Caco-2 (cell line): ENCODE measurements at regions of chrX and their contacts with region 1.

Region 1: GRCh38 chrX:136953867-136954787 is 73.6 kb upstream of the RBMX start:
- DNase-seq: peak; percentile 60 to 72
- H3K4me3 ChIP-seq: no peak overlapping the region
- H3K4me3 Mint-ChIP-seq: no peak overlapping the region
- H3K27ac Mint-ChIP-seq: no peak overlapping the region
- H3K4me1 ChIP-seq: no peaks in the 10 kb centered on the region
- H3K4me1 Mint-ChIP-seq: no peaks in the 10 kb centered on the region
- H3K27me3 ChIP-seq: no peaks in the 10 kb centered on the region
- H3K27me3 Mint-ChIP-seq: no peaks in the 10 kb centered on the region
- CTCF ChIP-seq: peak; percentile 46 to 74

Region 2: GRCh38 chrX:137051978-137052642 is 98.0 kb after region 1 on chrX:
- CTCF ChIA-PET with region 1: interaction called, 5 read pairs
- POLR2A ChIA-PET with region 1: no interaction called
- intact Hi-C with region 1: loop called (anchors 1 kb)
- DNase-seq: peak; percentile 50 to 70
- H3K4me3 ChIP-seq: 0 out of 2 replicates have a peak overlapping the region, but pooled peaks have one; percentile 6
- H3K4me3 Mint-ChIP-seq: peak overlapping the region; percentile 64
- H3K27ac Mint-ChIP-seq: no peak overlapping the region
- H3K4me1 ChIP-seq: no peaks in the 10 kb centered on the region
- H3K4me1 Mint-ChIP-seq: no peaks in the 10 kb centered on the region
- H3K27me3 ChIP-seq: no peaks in the 10 kb centered on the region
- H3K27me3 Mint-ChIP-seq: peaks cover 17% of the 10 kb centered on the region
- CTCF ChIP-seq: peak; percentile 81 to 82

Region 3: GRCh38 chrX:137194164-137194563 is 240.0 kb after region 1 on chrX:
- CTCF ChIA-PET with region 1: no interaction called
- POLR2A ChIA-PET with region 1: no interaction called
- intact Hi-C with region 1: loop called (anchors 10 kb)
- DNase-seq: peak; percentile 23 to 25
- H3K4me3 ChIP-seq: no peak overlapping the region
- H3K4me3 Mint-ChIP-seq: no peak overlapping the region
- H3K27ac Mint-ChIP-seq: no peak overlapping the region
- H3K4me1 ChIP-seq: no peaks in the 10 kb centered on the region
- H3K4me1 Mint-ChIP-seq: no peaks in the 10 kb centered on the region
- H3K27me3 ChIP-seq: no peaks in the 10 kb centered on the region
- H3K27me3 Mint-ChIP-seq: peaks cover 3% of the 10 kb centered on the region
- CTCF ChIP-seq: peak; percentile 22 to 36

Region 4: GRCh38 chrX:137418099-137418498 is 464.0 kb after region 1 on chrX:
- CTCF ChIA-PET with region 1: no interaction called
- POLR2A ChIA-PET with region 1: no interaction called
- intact Hi-C with region 1: loop called (anchors 10 kb)
- DNase-seq: no peak
- H3K4me3 ChIP-seq: no peak overlapping the region
- H3K4me3 Mint-ChIP-seq: no peak overlapping the region
- H3K27ac Mint-ChIP-seq: no peak overlapping the region
- H3K4me1 ChIP-seq: no peaks in the 10 kb centered on the region
- H3K4me1 Mint-ChIP-seq: no peaks in the 10 kb centered on the region
- H3K27me3 ChIP-seq: no peaks in the 10 kb centered on the region
- H3K27me3 Mint-ChIP-seq: no peaks in the 10 kb centered on the region
- CTCF ChIP-seq: no peak